Left ventricle myocardium superior (tissue), 1 donor: ENCODE measurements at regions of chr17 and their contacts with region 1.

Region 1: GRCh38 chr17:17356149-17356930 is 53.2 kb downstream of the NT5M start:
- DNase-seq: peak; percentile 80
- ATAC-seq: peak; percentile 87

Region 2: DNA sequence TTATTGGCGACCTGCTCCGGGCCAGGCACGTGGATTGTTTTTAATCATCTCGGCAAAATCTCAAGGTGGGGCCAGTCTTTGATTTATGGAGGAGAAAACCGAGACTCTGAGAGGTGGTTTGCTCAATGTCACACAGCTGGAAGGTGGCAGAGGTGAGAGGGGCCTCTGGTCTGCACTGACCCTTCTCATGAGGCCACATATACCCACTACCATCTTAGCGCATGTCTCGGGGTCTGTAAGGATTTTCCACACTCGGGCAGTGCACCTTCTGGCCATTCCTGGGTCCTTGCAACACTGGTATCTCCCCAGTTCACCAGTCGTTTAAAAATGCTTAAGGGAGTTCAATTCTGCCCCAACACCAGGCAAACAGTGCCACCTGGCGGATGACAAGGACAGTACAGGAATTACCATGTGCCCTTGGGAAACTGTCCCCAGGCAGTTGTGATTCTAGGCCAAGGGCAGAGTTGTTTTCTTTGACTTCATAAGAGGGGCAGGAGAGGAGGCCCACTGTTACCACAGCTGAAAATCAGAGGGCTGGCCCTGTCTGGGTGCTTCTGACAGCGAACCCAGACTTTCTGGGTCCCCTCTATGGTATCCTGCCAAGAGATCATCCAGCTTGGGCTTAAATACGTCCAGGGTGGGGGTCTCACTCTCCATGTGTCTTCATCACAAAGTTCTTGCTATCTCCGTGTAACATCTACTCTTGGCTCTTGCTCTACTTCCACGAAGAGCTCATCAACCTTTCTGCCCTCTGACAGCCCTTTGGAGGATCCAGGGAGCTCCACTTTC is 285.5 kb after region 1 on chr17:
- intact Hi-C with region 1: loop called (anchors 5 kb)
- DNase-seq: peak; percentile 78
- ATAC-seq: peak; percentile 92